Left colon (tissue), 2 donors: ENCODE measurements at regions of chr15 and their contacts with region 1.

Region 1: DNA sequence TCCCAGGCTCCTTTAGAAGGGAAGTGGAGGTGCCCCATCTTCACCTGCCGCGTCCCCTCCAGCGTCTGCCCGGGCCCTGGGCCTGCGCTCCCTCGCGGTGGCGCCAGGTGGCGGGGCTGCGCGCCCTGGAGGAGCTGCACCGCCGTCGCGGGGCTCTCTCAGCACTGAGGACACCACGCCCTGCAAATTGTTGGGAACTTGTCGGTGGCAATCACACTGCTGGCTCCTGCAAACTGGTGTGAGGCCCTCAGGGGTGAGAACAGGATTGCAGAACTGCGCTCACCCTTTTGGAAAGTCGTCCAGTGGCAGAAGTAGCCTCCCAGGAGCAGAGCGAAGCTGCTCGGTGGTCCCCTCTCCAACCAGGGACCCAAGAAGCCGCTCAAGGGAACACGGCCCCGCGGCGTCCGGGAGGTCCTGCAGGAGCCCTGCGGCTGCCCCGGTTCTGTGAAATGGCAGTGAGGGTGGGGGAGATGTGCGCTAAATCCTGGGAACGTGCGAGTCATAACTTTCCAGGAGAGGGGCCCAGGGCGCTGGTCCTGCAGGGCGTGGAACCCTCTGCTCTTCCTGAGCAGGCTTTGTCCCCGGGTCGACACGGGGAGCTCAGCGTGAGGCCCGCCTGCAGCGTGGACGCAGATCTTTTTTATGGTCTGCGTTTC is 995 bp upstream of the LRRK1 start:
- DNase-seq: peak; percentile 87 to 88
- ATAC-seq: peak; percentile 89

Region 2: DNA sequence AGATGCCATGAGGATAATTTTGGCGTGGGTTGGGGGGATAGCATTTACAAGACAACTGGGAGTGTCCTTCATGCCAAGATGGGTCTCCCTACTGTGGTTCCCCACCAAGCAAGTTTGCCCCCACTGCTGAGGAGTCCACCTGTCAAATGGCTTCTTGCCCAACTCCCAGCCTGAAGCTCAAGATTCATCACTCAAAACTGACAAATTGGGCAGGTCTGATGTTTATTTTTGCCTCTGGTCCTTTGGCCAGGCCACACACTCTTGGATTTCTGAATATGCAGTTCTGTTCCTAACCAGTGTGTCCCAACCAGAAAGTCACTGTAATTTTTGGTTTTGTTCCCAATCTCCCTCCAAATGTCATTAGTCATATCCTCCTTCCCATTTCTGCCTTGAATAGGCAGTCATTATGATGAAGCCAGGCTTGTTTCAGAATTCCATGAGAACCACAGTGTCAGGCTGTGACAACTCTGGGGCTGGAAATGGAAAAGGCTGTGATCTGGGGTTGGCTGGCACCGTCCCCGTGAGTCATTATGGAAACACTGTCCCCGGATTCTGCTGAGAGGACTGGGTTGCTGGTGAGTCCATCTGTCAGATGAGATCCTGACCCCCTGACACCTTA is 1381.6 kb before region 1 on chr15:
- intact Hi-C with region 1: no loop called
- DNase-seq: no peak
- ATAC-seq: no peak

Region 3: GRCh38 chr15:101000271-101000681 is 82.1 kb after region 1 on chr15:
- intact Hi-C with region 1: loop called (anchors 5 to 10 kb)
- DNase-seq: no peak
- ATAC-seq: no peak

Region 4: DNA sequence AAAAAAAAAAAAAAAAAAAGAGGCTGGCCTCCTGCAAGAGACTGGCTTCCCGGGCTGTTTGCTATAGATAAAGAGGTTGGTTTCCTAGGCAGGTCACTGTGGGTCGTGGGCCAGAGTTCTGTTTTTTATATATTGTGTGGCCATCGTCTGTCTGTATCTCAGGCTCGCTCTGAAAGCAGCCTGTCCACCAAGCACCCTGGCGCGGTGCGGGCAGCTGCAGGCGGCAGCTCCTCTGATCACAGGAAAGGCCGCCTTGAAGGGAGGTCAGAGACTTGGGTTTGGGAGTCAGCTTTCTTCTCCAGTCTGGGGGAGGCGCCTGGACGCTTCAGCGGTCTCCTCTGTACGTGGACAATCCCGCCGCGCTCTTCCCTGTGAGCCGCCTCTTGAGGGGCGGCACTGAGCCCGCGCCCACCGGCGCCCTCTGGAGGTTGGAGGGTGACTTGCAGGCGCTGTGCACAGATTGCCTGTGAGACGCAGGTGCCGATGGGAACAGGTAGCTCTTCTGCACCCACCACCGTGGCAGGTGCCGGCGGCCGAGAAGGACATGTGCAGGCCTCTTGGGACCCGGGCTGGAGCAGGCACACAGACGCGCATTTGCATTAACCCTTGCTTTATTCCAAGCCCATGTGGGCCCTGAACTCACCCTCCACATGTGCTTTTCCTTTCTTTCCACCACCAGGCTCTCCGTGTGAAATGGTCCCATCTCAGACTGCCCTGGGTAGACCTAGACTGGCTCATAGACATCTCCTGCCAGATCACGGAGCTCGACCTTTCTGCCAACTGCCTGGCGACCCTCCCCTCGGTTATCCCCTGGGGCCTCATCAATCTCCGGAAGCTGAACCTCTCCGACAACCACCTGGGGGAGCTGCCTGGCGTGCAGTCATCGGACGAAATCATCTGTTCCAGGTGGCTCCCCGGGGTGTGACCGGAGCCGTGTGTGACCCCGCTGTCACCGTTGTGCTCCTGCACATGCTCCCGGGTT is 90.3 kb after region 1 on chr15:
- intact Hi-C with region 1: loop called (anchors 5 to 10 kb)
- DNase-seq: peak; percentile 77 to 90
- ATAC-seq: peak; percentile 83